Activated T-helper 1 cell treated with anti-CD3 and anti-CD28 coated beads, Interleukin-12 subunit alpha, Interleukin-12 subunit beta, Interleukin-2, Interleukin-4 antibody, amounts not matched to agents 30 ng/mL and 10 ng/mL and 1 ng/mL, durations not matched to agents 14 hours and 24 hours and 36 hours (primary cell): ENCODE measurements at regions of chr20 and their contacts with region 1.

Region 1: GRCh38 chr20:44521484-44522481 is at the start of gene SERINC3:
- DNase-seq: peak; percentile 96
- H3K4me3 Mint-ChIP-seq: peak within 1 kb of the TSS; percentile 88
- H3K27ac Mint-ChIP-seq: peak within 1 kb of the TSS; percentile 89
- H3K4me1 Mint-ChIP-seq: peaks cover 43% of the 10 kb centered on the region
- H3K27me3 Mint-ChIP-seq: no peaks in the 10 kb centered on the region
- total RNA-seq, gene SERINC3: 51.3 and 54.6 TPM in 2 replicates

Region 2: DNA sequence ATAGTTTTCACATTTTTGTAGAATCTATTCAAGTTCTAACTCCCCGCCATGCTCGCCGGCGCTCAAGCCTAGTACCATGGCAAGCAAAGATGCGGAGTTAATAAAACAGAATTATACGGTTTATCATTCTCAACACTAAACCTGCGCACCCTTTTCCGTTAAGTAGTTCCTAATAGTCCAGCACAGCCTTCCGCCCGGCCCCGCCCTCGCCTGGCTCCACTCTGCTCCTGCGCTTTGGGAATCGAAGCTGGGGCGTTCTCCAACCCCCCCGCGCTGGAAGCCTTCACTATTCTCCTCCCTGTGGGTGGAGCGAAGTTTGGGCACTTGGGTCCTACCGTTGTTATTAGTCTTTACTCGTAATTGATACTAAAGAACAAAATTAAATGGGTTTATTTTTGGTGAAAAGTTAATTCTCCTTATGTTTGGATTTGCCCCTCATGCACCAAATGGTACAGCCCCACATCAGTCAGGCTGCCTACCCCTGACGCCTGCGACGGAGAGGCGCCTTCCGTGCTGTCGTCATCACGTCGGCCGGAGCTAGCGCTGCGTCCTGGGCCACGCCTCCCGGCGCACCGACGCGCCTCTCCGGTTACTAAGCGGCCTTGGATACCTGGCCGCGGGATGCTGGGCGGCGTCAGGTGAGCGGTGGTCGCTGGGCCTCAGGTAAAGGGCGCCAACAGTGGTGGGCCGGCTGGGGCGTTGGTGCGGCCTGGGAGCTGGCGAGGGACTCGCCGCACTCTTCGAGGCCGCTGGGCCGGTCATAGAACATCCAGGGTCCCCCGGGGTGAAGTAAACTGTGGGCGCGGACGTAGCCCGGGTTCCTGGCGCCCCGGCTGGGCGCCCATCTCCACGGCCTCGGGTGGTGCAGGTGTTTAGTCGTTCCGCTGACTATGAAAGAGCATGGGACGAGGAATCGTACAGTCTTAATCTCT is 931.1 kb before region 1 on chr20 and contains the start of gene IFT52:
- intact Hi-C with region 1: loop called (anchors 10 kb)
- DNase-seq: peak; percentile 85
- H3K4me3 Mint-ChIP-seq: peak within 1 kb of the TSS; percentile 91
- H3K27ac Mint-ChIP-seq: peak within 1 kb of the TSS; percentile 95
- H3K4me1 Mint-ChIP-seq: peaks cover 22% of the 10 kb centered on the region
- H3K27me3 Mint-ChIP-seq: peaks cover 2% of the 10 kb centered on the region
- total RNA-seq, gene IFT52: 18.3 and 18.7 TPM in 2 replicates

Region 3: GRCh38 chr20:44310664-44311639 is 210.8 kb before region 1 on chr20 and contains the start of gene FITM2:
- intact Hi-C with region 1: loop called (anchors 1 kb)
- DNase-seq: peak; percentile 97
- H3K4me3 Mint-ChIP-seq: peak within 1 kb of the TSS; percentile 86
- H3K27ac Mint-ChIP-seq: peak within 1 kb of the TSS; percentile 87
- H3K4me1 Mint-ChIP-seq: peaks cover 18% of the 10 kb centered on the region
- H3K27me3 Mint-ChIP-seq: peaks cover 4% of the 10 kb centered on the region
- total RNA-seq, gene FITM2: 2.2 TPM in 2 replicates

Region 4: DNA sequence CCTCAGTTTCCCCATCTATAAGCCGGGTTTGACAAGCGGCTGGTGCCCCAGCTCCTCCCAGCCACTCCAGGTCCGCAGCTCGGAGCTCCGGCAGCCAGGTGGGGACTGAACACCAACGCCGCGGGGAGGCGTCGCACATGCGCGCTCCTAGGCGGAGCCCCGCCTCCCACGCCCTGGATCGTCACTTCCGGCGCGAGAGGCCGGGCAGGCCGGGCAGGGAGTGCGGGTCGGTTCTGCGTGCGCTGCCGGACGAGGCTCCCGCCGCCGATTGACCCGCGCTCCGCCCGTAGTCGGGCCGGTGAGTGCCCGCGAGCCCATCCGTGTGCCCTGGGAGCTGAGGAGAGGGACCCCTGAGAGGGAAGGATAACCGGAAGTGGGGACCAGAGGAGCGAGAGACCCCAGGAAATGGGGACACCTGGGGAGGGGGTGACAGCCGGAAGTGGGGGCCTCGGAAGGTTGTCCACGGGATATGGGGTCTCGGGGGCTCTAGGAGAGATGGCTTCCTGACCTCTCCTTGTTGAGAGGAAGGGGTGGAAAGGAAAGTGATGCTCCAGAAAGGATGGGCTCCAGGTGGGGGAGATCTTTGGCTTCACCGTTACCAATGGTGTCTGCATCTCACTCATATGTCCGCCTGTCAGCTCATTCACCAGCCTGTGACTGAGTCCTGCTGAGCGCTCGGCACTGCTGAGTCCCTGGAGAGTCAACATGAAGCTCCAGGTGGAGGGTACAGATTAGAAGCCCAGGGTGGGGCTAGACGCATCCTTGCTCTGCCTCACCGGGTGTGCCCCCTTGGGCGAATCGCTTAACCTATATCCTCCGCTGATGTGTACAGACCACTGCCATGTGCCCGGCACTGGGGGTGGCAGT is 45.9 kb before region 1 on chr20 and contains the start of gene TTPAL:
- intact Hi-C with region 1: loop called (anchors 1 kb)
- DNase-seq: peak; percentile 90
- H3K4me3 Mint-ChIP-seq: peak within 1 kb of the TSS; percentile 95
- H3K27ac Mint-ChIP-seq: peak within 1 kb of the TSS; percentile 93
- H3K4me1 Mint-ChIP-seq: peaks cover 20% of the 10 kb centered on the region
- H3K27me3 Mint-ChIP-seq: peaks cover 3% of the 10 kb centered on the region
- total RNA-seq, gene TTPAL: 22.9 and 24.7 TPM in 2 replicates

Region 5: DNA sequence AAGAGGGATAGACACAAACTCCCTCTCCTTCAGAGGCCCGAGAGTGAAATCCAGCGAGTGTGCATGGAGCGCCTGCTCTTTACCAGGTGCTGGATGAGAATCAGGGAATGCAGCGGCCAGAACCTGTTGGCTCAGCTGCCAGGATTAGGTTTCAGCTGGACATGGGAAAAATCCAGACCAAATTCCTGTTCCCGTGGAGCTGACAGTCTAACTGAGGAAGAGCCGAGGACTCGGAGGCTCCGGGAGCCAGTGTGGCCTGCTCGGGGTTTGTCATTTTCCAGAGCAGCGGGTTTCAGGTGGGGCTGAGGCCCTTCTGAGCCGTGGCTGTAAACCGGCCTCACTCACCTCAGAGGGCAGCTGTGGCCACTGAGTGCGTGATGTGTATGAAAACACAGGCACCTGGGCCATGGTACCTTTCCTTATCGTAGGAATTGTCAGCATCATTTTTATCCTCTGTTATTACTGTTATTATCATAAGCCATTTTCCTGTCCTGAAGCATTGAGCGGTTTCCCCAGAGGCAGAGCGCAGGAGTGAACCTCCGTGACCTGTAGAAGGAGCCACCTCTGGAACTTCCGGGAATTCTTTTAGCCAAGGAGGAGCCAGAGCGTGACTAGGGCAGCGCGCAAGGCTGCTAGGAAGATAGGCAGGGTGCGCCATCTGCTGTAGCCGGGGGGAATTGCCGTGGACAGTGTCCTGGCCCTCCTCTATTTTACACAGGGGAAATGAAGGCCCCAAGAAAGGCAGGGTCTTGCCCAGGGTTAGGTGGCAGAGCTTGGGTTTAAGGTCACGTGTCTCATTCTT is 87.9 kb after region 1 on chr20:
- intact Hi-C with region 1: loop called (anchors 1 kb)
- DNase-seq: peak; percentile 69
- H3K4me3 Mint-ChIP-seq: peak overlapping the region; percentile 39
- H3K27ac Mint-ChIP-seq: no peak overlapping the region
- H3K4me1 Mint-ChIP-seq: peaks cover 12% of the 10 kb centered on the region
- H3K27me3 Mint-ChIP-seq: no peaks in the 10 kb centered on the region

Region 6: DNA sequence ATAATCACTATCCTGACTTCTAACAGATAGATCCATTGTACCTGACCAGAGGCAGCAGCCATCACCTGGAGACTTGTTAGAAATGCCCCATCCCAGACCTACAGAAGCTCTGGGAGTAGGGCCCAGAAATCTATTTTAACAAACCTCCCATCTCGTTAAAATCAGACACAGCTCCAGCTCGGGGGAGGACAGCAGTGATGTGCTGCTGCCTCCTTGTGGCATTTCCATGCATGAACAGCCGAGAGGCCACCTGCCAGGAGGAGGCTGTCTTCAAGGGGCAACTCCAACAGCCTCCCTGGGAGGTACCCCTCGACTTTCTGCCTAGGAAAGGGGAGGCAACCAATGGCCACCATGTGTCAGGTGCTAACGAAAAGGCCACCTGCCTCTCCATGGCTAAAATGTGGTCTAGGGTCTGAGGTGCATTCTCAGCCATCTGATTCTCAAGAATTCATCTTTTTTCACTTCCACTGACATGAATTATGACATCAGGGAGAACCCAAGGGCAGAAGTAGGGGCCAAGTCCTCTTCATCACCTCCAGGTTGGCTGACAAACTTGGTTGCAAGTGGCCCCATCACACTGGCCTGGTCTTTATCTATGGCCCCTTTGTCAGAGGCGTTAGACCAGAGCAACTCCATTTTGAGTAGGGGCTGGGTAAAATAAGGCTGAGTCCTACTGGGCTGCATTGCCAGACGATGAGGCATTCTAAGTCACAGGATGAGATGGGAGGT is 211.7 kb after region 1 on chr20:
- intact Hi-C with region 1: loop called (anchors 10 kb)
- DNase-seq: peak; percentile 45
- H3K4me3 Mint-ChIP-seq: no peak overlapping the region
- H3K27ac Mint-ChIP-seq: no peak overlapping the region
- H3K4me1 Mint-ChIP-seq: peaks cover 42% of the 10 kb centered on the region
- H3K27me3 Mint-ChIP-seq: peaks cover 2% of the 10 kb centered on the region